Head of caudate nucleus (tissue), 42 donors: ENCODE measurements at regions of chr1 and their contacts with region 1.

Region 1: GRCh38 chr1:89762779-89763648 is 57.8 kb upstream of the LRRC8D start:
- DNase-seq: peak; percentile 81 to 96 (median 90)

Region 2: DNA sequence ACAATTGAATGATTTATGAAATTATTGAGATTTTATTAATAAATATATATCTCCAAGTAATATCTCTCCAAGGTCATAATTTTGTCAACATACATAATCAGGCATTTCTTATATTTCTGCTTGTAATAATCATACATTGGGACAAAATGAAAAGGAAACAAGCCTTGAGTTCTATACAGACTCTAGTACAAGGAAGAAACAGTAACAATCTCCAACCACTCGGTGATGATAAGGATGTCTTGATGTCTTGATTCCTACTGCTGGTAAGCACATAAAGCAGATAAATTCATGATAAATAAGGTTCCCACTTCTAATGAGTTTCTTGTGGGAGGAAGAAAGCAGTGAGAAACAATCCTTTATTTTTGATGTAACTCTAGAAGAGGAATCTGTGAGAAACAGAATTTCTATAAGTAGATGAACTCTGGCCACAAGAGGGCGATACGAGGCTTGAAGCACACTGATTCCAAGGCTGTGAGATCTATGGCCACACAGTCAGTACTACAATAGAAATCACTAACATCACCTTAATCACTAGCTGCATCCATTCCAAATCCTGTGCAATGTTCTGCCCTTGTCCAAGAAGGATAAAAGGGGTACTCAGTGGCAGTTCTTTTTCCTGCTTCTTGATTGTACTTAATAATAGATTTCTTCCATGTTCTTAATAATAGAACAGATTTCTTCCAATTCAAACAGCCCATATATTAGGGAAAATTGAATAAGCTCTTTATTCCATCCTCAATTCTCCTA is 279.8 kb before region 1 on chr1:
- intact Hi-C with region 1: loop called (anchors 5 kb)
- DNase-seq: peak; percentile 45 to 96 (median 86)

Region 3: DNA sequence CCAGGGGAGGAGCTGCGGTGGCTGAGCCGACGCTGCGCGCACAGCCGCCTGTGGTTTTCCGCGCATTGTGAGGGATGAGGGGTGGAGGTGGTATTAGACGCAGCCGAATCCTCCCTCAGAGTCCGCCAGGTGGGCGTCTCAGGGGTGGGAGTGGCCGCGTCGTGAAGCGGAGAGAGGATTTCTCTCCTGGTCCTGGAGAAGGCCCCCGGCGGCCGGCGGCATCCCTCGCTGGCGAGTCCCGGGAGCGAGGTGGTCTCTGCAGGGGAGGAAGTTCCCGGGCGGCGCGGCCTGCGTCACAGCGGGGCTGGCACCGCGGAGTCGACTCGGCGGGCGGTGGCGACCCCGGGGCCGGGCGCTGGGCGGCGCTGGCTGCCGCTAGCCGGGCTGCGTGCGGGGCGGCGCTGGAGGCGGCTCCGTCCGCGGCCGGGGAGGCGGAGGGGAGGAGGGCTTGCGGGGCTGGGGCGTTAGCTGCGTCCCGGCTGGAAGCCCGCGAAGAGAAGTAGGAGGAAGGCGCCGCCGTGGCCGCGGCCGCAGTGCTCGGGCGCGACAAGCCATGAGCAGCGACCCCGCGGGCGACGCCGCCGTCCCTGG is 130.3 kb before region 1 on chr1 and contains the start of gene LRRC8C:
- intact Hi-C with region 1: loop called (anchors 2 kb)
- DNase-seq: peak; percentile 61 to 94 (median 89)